ENCODE measurements at regions of chr1 and their contacts with region 1.

Region 1: GRCh38 chr1:202076050-202076511 is 46.6 kb upstream of the GPR37L1 start:
- DNase-seq: peak; percentile 83 to 89
- H3K4me3 ChIP-seq: no peak overlapping the region
- H3K4me3 Mint-ChIP-seq: peak overlapping the region; percentile 25
- H3K27ac Mint-ChIP-seq: peak overlapping the region; percentile 88
- H3K4me1 ChIP-seq: peaks cover 54% of the 10 kb centered on the region
- H3K4me1 Mint-ChIP-seq: peaks cover 46% of the 10 kb centered on the region
- H3K27me3 ChIP-seq: no peaks in the 10 kb centered on the region
- H3K27me3 Mint-ChIP-seq: no peaks in the 10 kb centered on the region
- CTCF ChIP-seq: no peak

Region 2: DNA sequence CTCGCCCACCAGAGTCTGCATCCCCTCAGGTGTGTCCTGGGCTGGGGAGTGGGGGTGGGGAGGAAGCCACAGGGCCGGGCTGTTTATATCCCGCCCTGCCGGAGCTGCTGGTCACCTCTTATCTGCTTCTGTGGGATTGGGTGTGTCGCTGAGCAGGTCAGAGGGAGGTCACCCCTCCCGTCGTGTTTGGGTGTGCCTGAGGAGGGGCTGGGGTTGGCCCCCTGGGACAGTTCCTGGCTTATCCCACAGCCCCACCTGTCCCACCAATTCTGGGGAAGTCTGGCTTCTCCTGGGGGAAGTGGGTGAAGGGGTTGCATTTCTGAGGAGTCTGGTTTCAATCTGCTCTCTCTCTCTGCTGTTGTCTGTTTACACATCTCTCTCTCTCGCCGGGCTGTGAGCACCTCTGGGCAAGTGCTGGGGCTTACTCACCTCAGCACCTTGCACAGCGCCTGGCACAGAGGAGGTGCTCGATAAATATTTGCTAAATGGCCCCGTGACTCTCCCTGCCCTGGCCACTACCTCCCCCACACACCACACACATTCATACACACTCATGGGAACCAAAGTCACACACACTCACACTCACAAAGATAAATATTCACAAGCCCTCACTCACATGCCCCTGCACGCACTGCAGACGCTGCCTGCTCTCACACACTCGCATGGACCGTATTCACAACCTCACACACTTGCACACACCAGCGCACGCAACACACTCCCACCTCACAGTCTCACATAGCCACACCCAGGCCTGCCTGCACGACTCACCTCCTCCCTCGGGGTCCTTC is 57.4 kb before region 1 on chr1:
- CTCF ChIA-PET with region 1: no interaction called
- POLR2A ChIA-PET with region 1: interaction called, 14 read pairs
- intact Hi-C with region 1: no loop called
- DNase-seq: peak; percentile 87 to 94
- H3K4me3 ChIP-seq: peak overlapping the region; percentile 20
- H3K4me3 Mint-ChIP-seq: peak overlapping the region; percentile 65
- H3K27ac Mint-ChIP-seq: peak overlapping the region; percentile 71
- H3K4me1 ChIP-seq: peaks cover 71% of the 10 kb centered on the region
- H3K4me1 Mint-ChIP-seq: peaks cover 50% of the 10 kb centered on the region
- H3K27me3 ChIP-seq: no peaks in the 10 kb centered on the region
- H3K27me3 Mint-ChIP-seq: no peaks in the 10 kb centered on the region
- CTCF ChIP-seq: no peak

Region 3: GRCh38 chr1:202046227-202046801 is 29.8 kb before region 1 on chr1:
- CTCF ChIA-PET with region 1: interaction called, 3 read pairs
- POLR2A ChIA-PET with region 1: interaction called, 6 read pairs
- intact Hi-C with region 1: loop called (anchors 1 kb)
- DNase-seq: peak; percentile 63 to 71
- H3K4me3 ChIP-seq: no peak overlapping the region
- H3K4me3 Mint-ChIP-seq: no peak overlapping the region
- H3K27ac Mint-ChIP-seq: peak overlapping the region; percentile 48
- H3K4me1 ChIP-seq: peaks cover 63% of the 10 kb centered on the region
- H3K4me1 Mint-ChIP-seq: peaks cover 49% of the 10 kb centered on the region
- H3K27me3 ChIP-seq: no peaks in the 10 kb centered on the region
- H3K27me3 Mint-ChIP-seq: no peaks in the 10 kb centered on the region
- CTCF ChIP-seq: no peak

Region 4: DNA sequence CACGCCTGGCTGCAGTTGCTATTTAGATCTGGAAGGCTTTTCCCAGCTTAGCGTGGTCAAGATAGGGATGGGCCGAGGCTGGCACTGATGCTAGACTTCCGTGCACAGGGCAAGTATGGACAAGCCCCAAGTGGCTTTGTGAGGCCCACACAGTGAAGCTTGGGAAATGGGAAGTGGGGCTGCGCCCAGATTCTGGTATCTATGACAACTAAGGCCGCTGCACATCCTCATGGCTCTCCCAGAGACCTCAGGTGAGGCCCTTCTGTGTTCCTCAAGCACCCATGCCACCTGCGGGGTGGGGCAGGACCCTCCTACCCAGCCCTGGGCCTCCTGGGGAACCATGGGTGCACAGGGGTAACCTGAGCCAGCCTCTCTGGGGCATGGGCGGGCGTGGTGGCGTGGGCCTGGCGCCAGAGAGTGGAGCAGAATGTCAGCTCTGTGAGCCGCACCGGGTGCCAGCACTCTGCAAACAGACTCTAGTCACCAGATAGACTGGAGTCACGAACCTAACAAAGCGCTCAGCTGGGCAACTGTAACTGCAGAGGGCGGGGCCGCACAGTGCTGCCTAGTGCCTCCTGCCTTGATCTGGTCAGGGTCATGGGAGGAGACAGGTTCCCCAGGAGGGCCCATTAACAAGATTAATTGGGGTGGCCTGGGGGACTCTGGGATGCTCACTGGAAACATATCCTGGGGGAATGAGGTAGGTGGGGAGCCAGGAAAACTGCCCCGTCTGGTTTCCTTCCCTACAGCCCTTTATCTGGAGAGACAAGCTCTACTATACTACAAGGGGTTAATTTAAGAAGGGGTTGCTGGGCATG is 19.2 kb before region 1 on chr1:
- CTCF ChIA-PET with region 1: interaction called, 3 read pairs
- POLR2A ChIA-PET with region 1: no interaction called
- intact Hi-C with region 1: loop called (anchors 2 kb)
- DNase-seq: peak in 1 of 2 experiments; percentile 73
- H3K4me3 ChIP-seq: no peak overlapping the region
- H3K4me3 Mint-ChIP-seq: no peak overlapping the region
- H3K27ac Mint-ChIP-seq: peak overlapping the region; percentile 26
- H3K4me1 ChIP-seq: peaks cover 30% of the 10 kb centered on the region
- H3K4me1 Mint-ChIP-seq: peaks cover 25% of the 10 kb centered on the region
- H3K27me3 ChIP-seq: no peaks in the 10 kb centered on the region
- H3K27me3 Mint-ChIP-seq: no peaks in the 10 kb centered on the region
- CTCF ChIP-seq: no peak

Region 5: GRCh38 chr1:202105539-202106276 is 29.6 kb after region 1 on chr1:
- CTCF ChIA-PET with region 1: no interaction called
- POLR2A ChIA-PET with region 1: interaction called, 7 read pairs
- intact Hi-C with region 1: loop called (anchors 2 kb)
- DNase-seq: peak; percentile 89 to 92
- H3K4me3 ChIP-seq: no peak overlapping the region
- H3K4me3 Mint-ChIP-seq: peak overlapping the region; percentile 53
- H3K27ac Mint-ChIP-seq: peak overlapping the region; percentile 89
- H3K4me1 ChIP-seq: peaks cover 45% of the 10 kb centered on the region
- H3K4me1 Mint-ChIP-seq: peaks cover 42% of the 10 kb centered on the region
- H3K27me3 ChIP-seq: no peaks in the 10 kb centered on the region
- H3K27me3 Mint-ChIP-seq: no peaks in the 10 kb centered on the region
- CTCF ChIP-seq: no peak

Measured in Caco-2 (cell line).